PC-9 (cell line): ENCODE measurements at regions of chr15 and their contacts with region 1.

Region 1: DNA sequence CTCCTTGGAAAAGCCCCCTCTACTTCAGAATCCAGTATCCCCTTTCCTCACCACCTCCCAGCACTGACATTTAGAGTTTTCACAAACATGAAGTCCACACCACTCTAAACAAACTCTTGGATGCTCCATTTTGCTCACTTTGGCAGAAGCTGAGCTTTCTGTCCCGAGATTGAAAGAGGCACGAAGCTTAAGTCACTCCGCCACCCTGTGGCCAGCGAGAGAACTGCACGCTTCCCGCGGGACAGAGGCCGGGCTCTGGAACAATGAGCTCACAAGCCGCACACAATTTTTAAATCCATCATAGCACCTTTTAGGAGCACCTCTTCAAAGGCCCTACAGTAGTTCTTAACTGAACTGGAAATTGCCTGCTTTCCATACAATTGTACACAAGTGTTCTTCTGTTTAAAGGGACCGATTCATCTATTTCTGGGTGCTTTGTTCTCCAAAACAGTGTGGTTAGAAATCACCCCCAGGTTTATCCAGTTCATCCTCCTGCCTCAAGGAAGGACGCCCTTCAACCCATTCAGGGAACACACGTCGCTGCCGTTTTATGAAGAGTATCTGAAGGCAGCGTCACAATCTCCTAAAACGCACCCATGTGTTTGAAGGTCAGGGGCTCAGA is 226.1 kb downstream of the VPS13C start:
- DNase-seq: peak; percentile 47 to 75
- H3K4me3 ChIP-seq: no peak overlapping the region
- H3K27ac ChIP-seq: no peak overlapping the region
- H3K4me1 ChIP-seq: no peaks in the 10 kb centered on the region
- H3K27me3 ChIP-seq: no peaks in the 10 kb centered on the region
- CTCF ChIP-seq: peak; percentile 89

Region 2: DNA sequence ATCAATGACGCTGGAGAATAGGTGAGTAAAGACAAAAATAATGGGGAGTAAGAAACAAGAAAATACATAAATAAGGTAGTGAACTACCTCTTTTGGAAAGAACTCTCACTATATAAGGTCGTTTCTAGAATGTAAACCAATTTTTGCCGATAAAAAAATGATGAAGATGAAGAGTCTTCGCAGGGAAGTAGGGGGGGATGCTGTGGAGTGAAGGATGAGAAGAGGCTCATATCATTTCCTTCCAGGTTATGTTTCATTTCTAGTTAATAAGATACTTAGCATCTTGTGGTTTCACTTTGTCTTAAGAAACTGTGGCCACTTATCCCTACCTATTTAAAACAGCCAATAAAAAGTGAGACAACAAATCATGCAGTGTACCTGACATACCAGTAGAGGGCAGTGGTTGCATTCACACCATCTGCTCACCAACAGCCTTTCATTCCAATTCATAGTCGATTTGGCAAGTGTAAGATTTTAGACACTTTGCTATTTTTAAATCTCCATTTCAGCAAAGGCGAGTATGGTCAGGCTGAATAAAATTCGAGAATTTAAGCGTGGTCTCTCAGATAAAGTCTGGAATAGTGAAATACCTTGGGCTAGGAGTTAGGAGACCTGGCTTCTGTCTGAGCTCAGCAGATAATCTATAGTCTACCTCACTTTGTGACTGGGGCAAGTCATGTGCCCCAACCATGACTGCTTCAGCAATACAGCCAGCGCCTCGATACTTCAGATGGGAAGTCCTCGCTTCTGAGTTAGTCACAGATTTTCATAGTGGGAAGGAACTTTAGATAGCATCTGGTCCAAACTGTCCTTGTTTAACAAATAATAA is 1326.4 kb before region 1 on chr15:
- CTCF ChIA-PET with region 1: no interaction called
- POLR2A ChIA-PET with region 1: no interaction called
- intact Hi-C with region 1: loop called (anchors 5 kb)
- DNase-seq: peak in 1 of 2 experiments; percentile 45
- H3K4me3 ChIP-seq: no peak overlapping the region
- H3K27ac ChIP-seq: no peak overlapping the region
- H3K4me1 ChIP-seq: no peaks in the 10 kb centered on the region
- H3K27me3 ChIP-seq: no peaks in the 10 kb centered on the region
- CTCF ChIP-seq: peak; percentile 85

Region 3: DNA sequence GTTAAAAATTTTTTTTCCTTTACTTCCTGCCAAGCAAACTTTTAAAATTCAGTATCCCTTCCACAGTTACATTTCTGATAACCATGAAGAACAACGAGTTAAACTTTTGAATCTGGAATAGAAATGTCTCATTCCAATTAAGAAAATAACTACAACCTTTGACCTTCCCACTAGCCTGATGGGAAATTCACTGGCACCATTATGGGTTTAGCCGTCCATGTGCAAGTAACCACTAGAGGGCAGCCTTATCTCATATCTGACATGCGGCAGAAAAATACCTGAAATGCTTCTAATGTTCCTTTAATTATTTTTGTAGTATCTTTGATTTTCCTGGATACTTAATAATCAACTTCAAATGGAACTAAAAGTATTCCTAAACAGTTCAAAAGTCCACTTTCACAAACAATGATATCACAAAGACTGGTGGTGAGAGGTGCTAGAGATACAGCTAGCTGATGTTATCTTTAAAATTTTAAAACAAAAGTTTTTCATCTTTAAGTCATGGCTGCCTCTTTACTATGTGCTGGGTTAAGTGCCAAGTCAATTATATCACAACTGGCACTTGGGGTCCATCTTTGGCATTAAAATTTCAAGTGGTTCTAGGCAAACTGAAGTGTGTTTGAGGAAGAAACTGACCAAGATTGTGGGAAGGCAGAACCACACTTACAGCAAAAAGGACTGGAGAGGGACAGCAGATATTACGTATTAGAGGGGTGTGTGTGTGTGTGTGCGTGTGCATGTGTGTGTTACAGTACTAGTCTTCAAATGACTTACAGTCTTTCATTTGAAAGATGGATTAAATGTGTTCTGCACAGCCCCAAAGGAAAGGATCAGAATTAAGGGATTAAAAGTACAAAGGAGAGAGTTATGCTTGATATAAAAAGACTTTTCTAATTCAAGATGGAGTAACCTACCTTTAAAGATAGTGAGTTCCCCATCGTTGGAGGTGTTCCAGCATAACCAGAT is 1248.2 kb before region 1 on chr15:
- CTCF ChIA-PET with region 1: interaction called, 11 read pairs
- POLR2A ChIA-PET with region 1: no interaction called
- intact Hi-C with region 1: loop called (anchors 2 kb)
- DNase-seq: peak; percentile 38 to 48
- H3K4me3 ChIP-seq: no peak overlapping the region
- H3K27ac ChIP-seq: no peak overlapping the region
- H3K4me1 ChIP-seq: peaks cover 8% of the 10 kb centered on the region
- H3K27me3 ChIP-seq: no peaks in the 10 kb centered on the region
- CTCF ChIP-seq: peak; percentile 82

Region 4: GRCh38 chr15:61051569-61052031 is 782.6 kb before region 1 on chr15:
- CTCF ChIA-PET with region 1: no interaction called
- POLR2A ChIA-PET with region 1: no interaction called
- intact Hi-C with region 1: loop called (anchors 10 kb)
- DNase-seq: peak in 1 of 2 experiments; percentile 29
- H3K4me3 ChIP-seq: no peak overlapping the region
- H3K27ac ChIP-seq: no peak overlapping the region
- H3K4me1 ChIP-seq: no peaks in the 10 kb centered on the region
- H3K27me3 ChIP-seq: no peaks in the 10 kb centered on the region
- CTCF ChIP-seq: peak; percentile 64

Region 5: GRCh38 chr15:61169904-61170695 is 664.1 kb before region 1 on chr15:
- CTCF ChIA-PET with region 1: interaction called, 5 read pairs
- POLR2A ChIA-PET with region 1: no interaction called
- intact Hi-C with region 1: loop called (anchors 2 kb)
- DNase-seq: no peak
- H3K4me3 ChIP-seq: no peak overlapping the region
- H3K27ac ChIP-seq: no peak overlapping the region
- H3K4me1 ChIP-seq: no peaks in the 10 kb centered on the region
- H3K27me3 ChIP-seq: no peaks in the 10 kb centered on the region
- CTCF ChIP-seq: no peak

Region 6: DNA sequence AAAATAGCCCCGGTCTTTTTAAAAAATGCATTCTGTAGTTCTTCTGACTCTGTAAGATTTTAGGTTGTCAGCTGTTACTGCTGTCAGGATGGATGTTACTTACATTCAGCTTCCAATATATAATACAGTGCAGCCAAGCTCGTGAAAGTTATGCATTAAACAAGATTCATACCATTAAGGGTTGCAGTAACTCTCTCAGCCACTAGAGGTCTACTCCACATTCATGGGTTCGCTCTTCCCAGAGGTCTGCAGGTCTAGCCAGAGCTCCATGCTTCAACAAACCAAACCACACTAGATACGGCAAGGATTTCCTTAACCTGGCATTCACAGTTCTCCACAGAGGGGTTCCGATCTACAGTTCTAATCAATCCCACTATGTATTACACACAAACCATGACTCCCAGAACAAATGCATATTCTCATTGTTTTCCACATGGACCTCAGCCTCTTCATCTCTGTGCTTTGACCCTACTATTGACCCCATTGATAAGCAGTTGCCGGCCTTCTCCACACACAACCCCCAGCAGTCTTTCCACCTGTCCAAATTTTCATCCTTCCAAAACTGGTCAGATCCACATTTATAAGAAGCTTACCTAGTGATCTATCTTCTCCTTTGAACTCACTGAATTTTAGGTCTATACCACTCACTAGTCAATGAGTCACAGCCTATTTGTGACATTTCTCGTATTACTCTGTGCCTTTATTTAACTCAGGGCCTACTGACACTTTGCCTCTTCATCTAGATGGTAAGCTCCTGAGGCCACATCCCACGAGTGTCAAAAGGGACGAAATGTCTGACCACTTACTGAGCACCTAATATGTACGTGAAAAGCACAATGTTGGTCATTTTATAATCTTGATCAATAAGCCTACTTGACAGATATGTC is 638.8 kb before region 1 on chr15:
- CTCF ChIA-PET with region 1: interaction called, 11 read pairs
- POLR2A ChIA-PET with region 1: no interaction called
- intact Hi-C with region 1: no loop called
- DNase-seq: no peak
- H3K4me3 ChIP-seq: no peak overlapping the region
- H3K27ac ChIP-seq: no peak overlapping the region
- H3K4me1 ChIP-seq: no peaks in the 10 kb centered on the region
- H3K27me3 ChIP-seq: no peaks in the 10 kb centered on the region
- CTCF ChIP-seq: peak; percentile 61

Region 7: GRCh38 chr15:61849447-61849846 is 15.3 kb after region 1 on chr15:
- CTCF ChIA-PET with region 1: interaction called, 10 read pairs
- POLR2A ChIA-PET with region 1: no interaction called
- intact Hi-C with region 1: no loop called
- DNase-seq: no peak
- H3K4me3 ChIP-seq: no peak overlapping the region
- H3K27ac ChIP-seq: no peak overlapping the region
- H3K4me1 ChIP-seq: no peaks in the 10 kb centered on the region
- H3K27me3 ChIP-seq: no peaks in the 10 kb centered on the region
- CTCF ChIP-seq: no peak